HCT116 (cell line): ENCODE measurements at regions of chr7 and their contacts with region 1.

Region 1: GRCh38 chr7:80699045-80699638 is 60.7 kb downstream of the CD36 start:
- DNase-seq: peak; percentile 58
- ATAC-seq: peak; percentile 80
- H3K4me3 ChIP-seq: no peak overlapping the region
- H3K27ac ChIP-seq: no peak overlapping the region
- H3K4me1 ChIP-seq: peaks cover 0 to 8% of the 10 kb centered on the region in 2 experiments; a peak in 3 of 4 replicates
- H3K27me3 ChIP-seq: no peaks in the 10 kb centered on the region
- CTCF ChIP-seq: peak; percentile 30 to 79 (median 70); a peak in 5 of 6 replicates
- POLR2A ChIP-seq: no peak
- RAD21 ChIP-seq: peak; percentile 92

Region 2: DNA sequence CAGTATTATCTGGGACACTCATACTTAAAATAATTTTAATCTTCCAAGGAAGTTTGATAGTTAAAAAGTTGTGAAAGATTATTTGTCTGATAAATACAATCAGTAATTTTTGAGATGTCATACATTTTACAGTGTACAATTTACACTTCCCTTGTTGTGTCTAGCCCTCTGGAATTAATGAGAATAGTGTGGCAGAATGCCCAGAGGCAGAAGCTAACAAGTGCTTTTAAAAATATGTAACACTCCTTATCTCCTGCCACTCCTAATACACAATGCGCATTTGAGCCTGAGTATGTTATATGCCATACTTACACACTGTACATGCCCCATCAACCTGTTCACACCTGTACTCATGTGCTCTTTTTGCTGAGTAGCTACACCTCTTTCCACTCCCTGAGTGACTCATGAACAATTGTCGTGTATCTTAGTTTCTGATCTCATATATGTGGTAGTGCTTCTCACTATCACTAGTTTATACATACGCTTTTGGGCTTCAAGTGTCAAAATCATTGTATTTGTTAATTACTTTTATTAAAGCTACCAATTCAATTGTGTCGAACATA is 671.5 kb before region 1 on chr7:
- CTCF ChIA-PET with region 1: no interaction called
- POLR2A ChIA-PET with region 1: no interaction called
- RAD21 ChIA-PET with region 1: no interaction called
- intact Hi-C with region 1: no loop called
- DNase-seq: no peak
- ATAC-seq: no peak
- H3K4me3 ChIP-seq: no peak overlapping the region
- H3K27ac ChIP-seq: no peak overlapping the region
- H3K4me1 ChIP-seq: no peaks in the 10 kb centered on the region
- H3K27me3 ChIP-seq: no peaks in the 10 kb centered on the region
- CTCF ChIP-seq: no peak
- POLR2A ChIP-seq: no peak
- RAD21 ChIP-seq: no peak

Region 3: GRCh38 chr7:80807166-80807885 is 108.2 kb after region 1 on chr7:
- CTCF ChIA-PET with region 1: no interaction called
- POLR2A ChIA-PET with region 1: no interaction called
- RAD21 ChIA-PET with region 1: no interaction called
- intact Hi-C with region 1: no loop called
- DNase-seq: no peak
- ATAC-seq: no peak
- H3K4me3 ChIP-seq: no peak overlapping the region
- H3K27ac ChIP-seq: no peak overlapping the region
- H3K4me1 ChIP-seq: peaks cover 3 to 17% of the 10 kb centered on the region in 2 experiments; a peak in 3 of 4 replicates
- H3K27me3 ChIP-seq: no peaks in the 10 kb centered on the region
- CTCF ChIP-seq: no peak
- POLR2A ChIP-seq: no peak
- RAD21 ChIP-seq: no peak

Region 4: GRCh38 chr7:81256991-81257390 is 557.8 kb after region 1 on chr7:
- CTCF ChIA-PET with region 1: no interaction called
- POLR2A ChIA-PET with region 1: no interaction called
- RAD21 ChIA-PET with region 1: no interaction called
- intact Hi-C with region 1: loop called (anchors 10 kb)
- DNase-seq: no peak
- ATAC-seq: no peak
- H3K4me3 ChIP-seq: no peak overlapping the region
- H3K27ac ChIP-seq: no peak overlapping the region
- H3K4me1 ChIP-seq: no peaks in the 10 kb centered on the region
- H3K27me3 ChIP-seq: no peaks in the 10 kb centered on the region
- CTCF ChIP-seq: peak in 2 of 3 experiments; percentile 2 to 17; a peak in 2 of 6 replicates
- POLR2A ChIP-seq: no peak
- RAD21 ChIP-seq: peak; percentile 49

Region 5: DNA sequence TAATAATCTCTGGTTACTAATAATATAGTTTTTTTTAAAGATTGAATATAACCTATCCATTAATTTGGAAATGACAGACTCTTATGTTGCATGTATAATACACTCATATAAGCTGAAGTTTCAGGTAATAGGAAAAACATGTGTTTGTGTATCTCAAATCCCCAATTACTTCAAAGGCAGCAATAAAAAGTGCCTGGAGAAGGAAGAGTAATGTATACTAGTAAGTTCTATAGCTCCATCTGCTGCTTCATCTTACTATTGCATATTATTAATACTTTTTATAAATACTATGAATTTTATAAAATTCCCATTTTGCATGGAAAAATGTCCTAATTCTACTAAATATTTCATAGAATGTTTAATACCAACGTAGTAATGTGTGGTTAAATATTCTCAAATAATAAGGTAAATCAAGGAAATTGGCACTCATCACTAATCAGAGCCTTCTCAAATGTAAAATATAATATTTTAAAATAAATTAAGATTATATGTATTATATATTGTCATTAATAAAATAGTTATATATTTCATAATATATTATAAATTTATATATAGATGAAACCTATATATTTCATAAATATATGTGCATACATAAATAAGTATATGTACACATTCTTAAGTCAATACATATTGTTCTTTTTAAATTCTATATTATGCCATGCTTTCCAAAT is 758.8 kb after region 1 on chr7:
- CTCF ChIA-PET with region 1: interaction called, 6 read pairs
- POLR2A ChIA-PET with region 1: no interaction called
- RAD21 ChIA-PET with region 1: no interaction called
- intact Hi-C with region 1: loop called (anchors 2 kb)
- DNase-seq: peak; percentile 13
- ATAC-seq: no peak
- H3K4me3 ChIP-seq: no peak overlapping the region
- H3K27ac ChIP-seq: no peak overlapping the region
- H3K4me1 ChIP-seq: no peaks in the 10 kb centered on the region
- H3K27me3 ChIP-seq: no peaks in the 10 kb centered on the region
- CTCF ChIP-seq: peak in 2 of 3 experiments; percentile 24 to 49; a peak in 4 of 6 replicates
- POLR2A ChIP-seq: no peak
- RAD21 ChIP-seq: peak; percentile 71

Region 6: GRCh38 chr7:81469869-81470723 is 771.0 kb after region 1 on chr7:
- CTCF ChIA-PET with region 1: interaction called, 18 read pairs
- POLR2A ChIA-PET with region 1: interaction called, 4 read pairs
- RAD21 ChIA-PET with region 1: interaction called in 1 of 2 experiments, 3 read pairs
- intact Hi-C with region 1: loop called (anchors 1 kb)
- DNase-seq: peak; percentile 73
- ATAC-seq: peak; percentile 96
- H3K4me3 ChIP-seq: no peak overlapping the region
- H3K27ac ChIP-seq: no peak overlapping the region
- H3K4me1 ChIP-seq: peaks cover 0 to 9% of the 10 kb centered on the region in 2 experiments; a peak in 1 of 4 replicates
- H3K27me3 ChIP-seq: no peaks in the 10 kb centered on the region
- CTCF ChIP-seq: peak; percentile 58 to 79 (median 66); a peak in 5 of 6 replicates
- POLR2A ChIP-seq: no peak
- RAD21 ChIP-seq: peak; percentile 86